MCF 10A (cell line): ENCODE measurements at regions of chr12 and their contacts with region 1.

Region 1: DNA sequence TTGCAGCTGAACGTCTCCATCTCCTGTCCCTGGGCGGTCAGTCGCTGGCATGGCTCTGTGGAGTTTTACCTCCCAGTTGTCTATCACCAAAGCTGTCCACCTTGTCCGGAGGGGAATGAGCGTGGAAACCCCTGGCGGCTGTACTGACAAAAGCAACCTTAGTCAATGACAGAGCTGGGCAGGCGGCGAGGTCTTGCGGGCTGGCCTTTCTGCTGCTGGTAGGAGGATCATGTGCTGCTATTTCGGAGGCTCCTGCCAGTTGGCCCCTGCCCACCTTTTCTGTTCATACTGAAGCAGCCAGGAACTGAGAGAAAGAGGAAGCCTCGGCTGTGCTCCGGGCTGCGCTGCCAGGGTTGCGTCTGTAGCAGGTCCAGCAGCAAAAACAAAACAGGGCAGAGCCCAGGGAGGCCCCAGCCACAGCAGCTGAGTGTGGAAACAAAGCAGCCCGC is 57.7 kb downstream of the HMGA2 start:
- DNase-seq: no peak
- H3K4me3 Mint-ChIP-seq: no peak overlapping the region
- H3K27ac Mint-ChIP-seq: peak overlapping the region; percentile 80
- H3K4me1 Mint-ChIP-seq: peaks cover 55% of the 10 kb centered on the region
- H3K27me3 Mint-ChIP-seq: no peaks in the 10 kb centered on the region
- CTCF ChIP-seq: no peak

Region 2: GRCh38 chr12:65169320-65170208 is 712.4 kb before region 1 on chr12 and contains the start of gene LEMD3:
- CTCF ChIA-PET with region 1: no interaction called
- POLR2A ChIA-PET with region 1: no interaction called
- intact Hi-C with region 1: no loop called
- DNase-seq: peak; percentile 96
- H3K4me3 Mint-ChIP-seq: peak within 1 kb of the TSS; percentile 100
- H3K27ac Mint-ChIP-seq: peak within 1 kb of the TSS; percentile 98
- H3K4me1 Mint-ChIP-seq: peaks cover 11% of the 10 kb centered on the region
- H3K27me3 Mint-ChIP-seq: no peaks in the 10 kb centered on the region
- CTCF ChIP-seq: no peak
- total RNA-seq, gene LEMD3: 21.8 and 27.7 TPM in 2 replicates

Region 3: DNA sequence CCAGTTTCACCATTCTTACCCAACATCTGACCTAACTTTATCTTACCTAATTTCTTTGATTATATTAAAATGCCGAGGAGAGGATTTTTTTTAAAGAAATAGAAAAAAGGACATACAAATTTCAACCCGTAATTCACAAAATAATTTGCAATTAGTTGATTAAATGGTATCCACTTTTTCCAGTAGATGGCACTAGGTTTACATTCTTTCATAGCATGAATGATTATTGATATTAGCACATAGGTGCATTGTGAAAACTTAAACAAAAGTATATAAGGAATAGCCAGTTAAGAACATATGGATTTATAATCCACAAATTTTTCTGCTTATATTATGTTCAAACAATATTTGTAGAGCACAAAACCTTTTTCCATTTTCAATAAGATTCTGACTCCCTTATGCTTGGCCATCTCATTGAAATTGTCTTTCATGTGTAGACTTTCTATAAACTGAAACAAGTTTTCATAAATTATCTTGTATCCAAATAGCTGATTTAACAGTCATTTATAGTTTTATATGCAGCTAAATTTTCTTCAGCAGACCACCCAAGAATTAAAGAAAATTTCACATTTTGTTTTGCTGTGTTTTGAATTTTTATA is 568.2 kb before region 1 on chr12:
- CTCF ChIA-PET with region 1: interaction called, 8 read pairs
- POLR2A ChIA-PET with region 1: no interaction called
- intact Hi-C with region 1: loop called (anchors 1 kb)
- DNase-seq: peak; percentile 52
- H3K4me3 Mint-ChIP-seq: no peak overlapping the region
- H3K27ac Mint-ChIP-seq: no peak overlapping the region
- H3K4me1 Mint-ChIP-seq: peaks cover 12% of the 10 kb centered on the region
- H3K27me3 Mint-ChIP-seq: no peaks in the 10 kb centered on the region
- CTCF ChIP-seq: peak; percentile 66

Region 4: DNA sequence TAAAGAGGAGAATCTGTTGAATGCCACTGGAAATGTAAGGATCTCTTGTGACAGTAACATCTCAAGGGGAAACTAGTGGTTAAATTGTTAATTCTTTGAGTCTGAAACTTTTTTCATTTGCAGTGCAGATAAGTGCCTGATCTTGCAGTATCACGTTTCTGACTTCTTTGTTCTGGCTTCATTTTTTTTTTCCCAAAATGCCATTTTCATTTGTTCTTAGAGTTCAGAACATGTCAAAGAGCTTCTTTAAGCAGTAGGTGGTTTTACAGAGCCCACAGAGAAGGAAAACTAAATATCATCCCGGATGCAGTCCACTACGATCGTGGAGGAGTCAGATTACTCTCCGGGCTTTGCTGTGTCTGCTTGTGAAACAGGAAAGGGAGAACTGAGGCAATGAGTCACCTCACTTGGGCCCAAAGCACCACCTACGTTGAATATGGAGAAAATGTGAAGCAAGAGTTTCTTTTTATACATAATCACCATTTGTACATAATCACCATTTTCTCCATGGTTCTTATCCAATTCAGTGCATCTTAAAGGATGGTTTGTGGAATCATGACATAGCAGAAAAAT is 13.8 kb before region 1 on chr12:
- CTCF ChIA-PET with region 1: interaction called, 9 read pairs
- POLR2A ChIA-PET with region 1: interaction called, 15 read pairs
- intact Hi-C with region 1: no loop called
- DNase-seq: peak; percentile 96
- H3K4me3 Mint-ChIP-seq: peak overlapping the region; percentile 70
- H3K27ac Mint-ChIP-seq: peak overlapping the region; percentile 79
- H3K4me1 Mint-ChIP-seq: peaks cover 53% of the 10 kb centered on the region
- H3K27me3 Mint-ChIP-seq: no peaks in the 10 kb centered on the region
- CTCF ChIP-seq: no peak

Region 5: GRCh38 chr12:65948320-65949008 is 66.5 kb after region 1 on chr12:
- CTCF ChIA-PET with region 1: interaction called, 3 read pairs
- POLR2A ChIA-PET with region 1: interaction called, 10 read pairs
- intact Hi-C with region 1: loop called (anchors 2 kb)
- DNase-seq: peak; percentile 98
- H3K4me3 Mint-ChIP-seq: peak overlapping the region; percentile 68
- H3K27ac Mint-ChIP-seq: peak overlapping the region; percentile 96
- H3K4me1 Mint-ChIP-seq: peaks cover 63% of the 10 kb centered on the region
- H3K27me3 Mint-ChIP-seq: no peaks in the 10 kb centered on the region
- CTCF ChIP-seq: no peak

Region 6: GRCh38 chr12:66055837-66056319 is 173.9 kb after region 1 on chr12:
- CTCF ChIA-PET with region 1: no interaction called
- POLR2A ChIA-PET with region 1: no interaction called
- intact Hi-C with region 1: no loop called
- DNase-seq: peak; percentile 7
- H3K4me3 Mint-ChIP-seq: no peak overlapping the region
- H3K27ac Mint-ChIP-seq: no peak overlapping the region
- H3K4me1 Mint-ChIP-seq: no peaks in the 10 kb centered on the region
- H3K27me3 Mint-ChIP-seq: no peaks in the 10 kb centered on the region
- CTCF ChIP-seq: no peak

Region 7: DNA sequence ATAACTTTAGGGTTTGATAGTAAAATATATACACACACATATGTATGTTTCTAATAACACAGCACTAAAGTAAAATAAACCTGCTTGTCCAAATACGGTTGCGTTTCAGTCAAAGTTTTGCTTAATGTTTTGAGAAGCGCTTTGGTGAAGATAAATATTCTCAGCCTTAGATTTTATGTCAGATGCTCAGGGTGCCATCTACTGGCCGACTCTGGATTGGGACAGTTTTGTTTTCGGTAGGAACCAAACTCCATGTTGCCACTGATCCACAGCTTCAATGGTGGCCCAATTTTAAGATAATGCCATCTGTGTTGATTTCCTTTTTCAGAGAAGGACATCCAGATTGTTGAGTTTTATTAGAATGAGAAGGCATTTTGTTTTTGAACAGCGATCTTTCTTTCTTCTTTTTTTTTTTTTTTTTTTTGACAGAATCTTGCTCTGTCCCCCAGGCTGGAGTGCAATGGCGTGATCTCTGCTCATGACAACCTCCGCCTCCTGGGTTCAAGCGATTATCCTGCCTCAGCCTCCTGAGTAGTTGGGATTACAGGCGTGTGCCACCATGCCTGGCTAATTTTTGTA is 205.5 kb after region 1 on chr12:
- CTCF ChIA-PET with region 1: interaction called, 8 read pairs
- POLR2A ChIA-PET with region 1: no interaction called
- intact Hi-C with region 1: loop called (anchors 2 kb)
- DNase-seq: peak; percentile 79
- H3K4me3 Mint-ChIP-seq: no peak overlapping the region
- H3K27ac Mint-ChIP-seq: no peak overlapping the region
- H3K4me1 Mint-ChIP-seq: peaks cover under 1% of the 10 kb centered on the region
- H3K27me3 Mint-ChIP-seq: no peaks in the 10 kb centered on the region
- CTCF ChIP-seq: peak; percentile 72

Region 8: GRCh38 chr12:66169221-66170170 is 287.5 kb after region 1 on chr12 and contains the start of gene TMBIM4:
- CTCF ChIA-PET with region 1: no interaction called
- POLR2A ChIA-PET with region 1: no interaction called
- intact Hi-C with region 1: no loop called
- DNase-seq: peak; percentile 86
- H3K4me3 Mint-ChIP-seq: peak within 1 kb of the TSS; percentile 98
- H3K27ac Mint-ChIP-seq: peak within 1 kb of the TSS; percentile 98
- H3K4me1 Mint-ChIP-seq: peaks cover 20% of the 10 kb centered on the region
- H3K27me3 Mint-ChIP-seq: no peaks in the 10 kb centered on the region
- CTCF ChIP-seq: peak; percentile 61
- total RNA-seq, gene TMBIM4: 58.5 and 74.3 TPM in 2 replicates

Region 9: GRCh38 chr12:66603458-66603857 is 721.5 kb after region 1 on chr12:
- CTCF ChIA-PET with region 1: no interaction called
- POLR2A ChIA-PET with region 1: no interaction called
- intact Hi-C with region 1: no loop called
- DNase-seq: peak; percentile 68
- H3K4me3 Mint-ChIP-seq: no peak overlapping the region
- H3K27ac Mint-ChIP-seq: no peak overlapping the region
- H3K4me1 Mint-ChIP-seq: no peaks in the 10 kb centered on the region
- H3K27me3 Mint-ChIP-seq: no peaks in the 10 kb centered on the region
- CTCF ChIP-seq: no peak